ENCODE measurements at regions of chr21 and their contacts with region 1.

Region 1: GRCh38 chr21:43866260-43866629 is 1.2 kb downstream of the AGPAT3 start:
- DNase-seq: peak; percentile 81
- ATAC-seq: peak; percentile 56
- H3K4me3 Mint-ChIP-seq: peak overlapping the region; percentile 79
- H3K27ac Mint-ChIP-seq: peak overlapping the region; percentile 95
- H3K4me1 Mint-ChIP-seq: peaks cover 44% of the 10 kb centered on the region
- H3K27me3 Mint-ChIP-seq: no peaks in the 10 kb centered on the region

Region 2: DNA sequence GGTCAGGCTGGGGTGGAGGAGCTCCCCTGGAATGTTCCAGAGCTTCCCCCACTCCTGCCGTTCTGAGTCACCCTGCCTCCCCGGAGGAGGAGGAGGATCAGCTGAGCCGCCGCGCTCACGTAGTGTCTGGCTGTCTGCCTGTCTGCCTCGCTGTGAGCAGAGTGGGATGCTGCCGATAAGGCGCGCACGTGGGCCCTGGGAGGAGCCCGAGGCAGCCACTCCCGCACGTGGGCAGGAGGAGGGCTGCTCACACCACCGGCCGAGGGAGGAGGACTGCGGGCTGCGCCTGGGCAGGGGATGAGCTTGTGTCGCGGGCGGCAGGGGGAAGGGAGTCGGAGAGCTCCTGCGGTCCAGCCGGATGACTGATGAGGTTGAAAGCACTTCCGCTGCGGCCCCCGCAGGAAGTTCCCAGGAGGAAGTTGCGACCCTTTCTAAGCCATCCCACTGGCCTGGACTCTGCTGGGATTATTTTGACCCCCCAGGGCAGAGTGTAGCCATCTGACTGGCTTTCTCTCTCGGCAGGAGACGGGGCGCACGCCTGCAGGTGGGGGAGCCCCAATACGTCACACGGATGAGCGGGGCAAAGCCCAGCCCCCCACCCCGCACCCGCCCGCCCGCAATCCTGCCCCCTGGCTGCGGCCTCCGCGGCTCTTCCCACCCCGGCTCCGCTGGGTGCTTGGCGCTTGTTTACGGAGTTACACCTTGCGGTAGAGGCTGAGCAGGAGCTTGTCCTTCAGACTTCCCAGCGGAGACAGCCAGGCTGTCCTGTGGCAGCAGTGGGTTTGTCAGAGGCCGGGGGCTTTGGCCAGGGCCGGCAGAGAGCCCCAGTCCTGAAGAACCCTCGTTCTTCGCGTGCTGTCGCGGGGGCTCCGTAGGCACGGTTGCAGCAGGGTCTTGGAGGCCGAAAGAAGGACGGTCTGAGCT is 137.5 kb before region 1 on chr21:
- CTCF ChIA-PET with region 1: no interaction called
- POLR2A ChIA-PET with region 1: no interaction called
- intact Hi-C with region 1: loop called in 1 of 2 experiments (anchors 1 kb)
- DNase-seq: peak; percentile 90
- ATAC-seq: peak; percentile 87
- H3K4me3 Mint-ChIP-seq: peak overlapping the region; percentile 78
- H3K27ac Mint-ChIP-seq: peak overlapping the region; percentile 92
- H3K4me1 Mint-ChIP-seq: peaks cover 71% of the 10 kb centered on the region
- H3K27me3 Mint-ChIP-seq: no peaks in the 10 kb centered on the region

Region 3: GRCh38 chr21:43893536-43894205 is 27.4 kb after region 1 on chr21:
- CTCF ChIA-PET with region 1: interaction called, 4 read pairs
- POLR2A ChIA-PET with region 1: interaction called, 3 read pairs
- intact Hi-C with region 1: loop called (anchors 1 kb)
- DNase-seq: peak; percentile 72
- ATAC-seq: peak; percentile 95
- H3K4me3 Mint-ChIP-seq: peak overlapping the region; percentile 70
- H3K27ac Mint-ChIP-seq: peak overlapping the region; percentile 90
- H3K4me1 Mint-ChIP-seq: peaks cover 47% of the 10 kb centered on the region
- H3K27me3 Mint-ChIP-seq: no peaks in the 10 kb centered on the region

Region 4: GRCh38 chr21:43916691-43917514 is 50.7 kb after region 1 on chr21:
- CTCF ChIA-PET with region 1: interaction called, 3 read pairs
- POLR2A ChIA-PET with region 1: no interaction called
- intact Hi-C with region 1: loop called (anchors 1 to 2 kb)
- DNase-seq: peak; percentile 84
- ATAC-seq: peak; percentile 83
- H3K4me3 Mint-ChIP-seq: peak overlapping the region; percentile 81
- H3K27ac Mint-ChIP-seq: peak overlapping the region; percentile 78
- H3K4me1 Mint-ChIP-seq: peaks cover 61% of the 10 kb centered on the region
- H3K27me3 Mint-ChIP-seq: no peaks in the 10 kb centered on the region

Region 5: GRCh38 chr21:43938751-43939442 is 72.7 kb after region 1 on chr21:
- CTCF ChIA-PET with region 1: no interaction called
- POLR2A ChIA-PET with region 1: no interaction called
- intact Hi-C with region 1: loop called in 1 of 2 experiments (anchors 2 kb)
- DNase-seq: peak; percentile 95
- ATAC-seq: peak; percentile 98
- H3K4me3 Mint-ChIP-seq: peak overlapping the region; percentile 76
- H3K27ac Mint-ChIP-seq: peak overlapping the region; percentile 86
- H3K4me1 Mint-ChIP-seq: peaks cover 19% of the 10 kb centered on the region
- H3K27me3 Mint-ChIP-seq: no peaks in the 10 kb centered on the region

Region 6: GRCh38 chr21:43956670-43957035 is 90.4 kb after region 1 on chr21:
- CTCF ChIA-PET with region 1: no interaction called
- POLR2A ChIA-PET with region 1: no interaction called
- intact Hi-C with region 1: loop called in 1 of 2 experiments (anchors 5 kb)
- DNase-seq: no peak
- ATAC-seq: no peak
- H3K4me3 Mint-ChIP-seq: no peak overlapping the region
- H3K27ac Mint-ChIP-seq: peak overlapping the region; percentile 53
- H3K4me1 Mint-ChIP-seq: peaks cover 23% of the 10 kb centered on the region
- H3K27me3 Mint-ChIP-seq: no peaks in the 10 kb centered on the region

Region 7: DNA sequence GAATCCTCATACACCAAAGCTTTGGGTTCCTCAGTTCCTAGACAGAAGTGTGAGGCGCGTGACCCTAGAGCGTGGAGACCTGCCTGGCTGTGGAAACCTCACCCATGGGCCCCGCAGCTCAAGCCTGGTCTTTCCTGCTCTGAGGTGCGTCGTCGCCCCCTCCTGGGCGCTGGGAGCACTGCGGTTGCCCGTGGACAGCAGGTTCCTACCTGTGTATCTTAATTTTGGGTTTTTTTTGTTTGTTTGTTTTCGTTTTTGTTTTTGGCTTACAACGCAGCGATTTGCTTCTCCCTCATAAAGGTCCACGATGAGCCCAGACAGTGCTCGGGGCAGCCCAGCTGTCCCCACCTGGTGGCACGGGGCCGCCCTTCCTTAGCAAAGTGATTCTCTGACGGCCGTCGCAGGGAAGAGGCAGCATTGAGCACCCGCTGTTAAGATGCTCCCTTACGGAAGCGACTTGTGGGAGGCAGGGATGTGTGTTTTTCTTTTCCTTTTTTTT is 109.3 kb after region 1 on chr21:
- CTCF ChIA-PET with region 1: interaction called, 3 read pairs
- POLR2A ChIA-PET with region 1: no interaction called
- intact Hi-C with region 1: loop called in 1 of 2 experiments (anchors 5 kb)
- DNase-seq: peak; percentile 92
- ATAC-seq: peak; percentile 94
- H3K4me3 Mint-ChIP-seq: no peak overlapping the region
- H3K27ac Mint-ChIP-seq: peak overlapping the region; percentile 86
- H3K4me1 Mint-ChIP-seq: peaks cover 9% of the 10 kb centered on the region
- H3K27me3 Mint-ChIP-seq: no peaks in the 10 kb centered on the region